Right cardiac atrium (tissue), 5 donors: ENCODE measurements at regions of chr2 and their contacts with region 1.

Region 1: GRCh38 chr2:212777020-212777491 is 238.5 kb upstream of the ERBB4 start:
- DNase-seq: no peak
- ATAC-seq: no peak
- H3K4me3 ChIP-seq: no peak overlapping the region
- H3K27ac ChIP-seq: no peak overlapping the region
- H3K4me1 ChIP-seq: no peaks in the 10 kb centered on the region
- H3K27me3 ChIP-seq: no peaks in the 10 kb centered on the region

Region 2: GRCh38 chr2:212892193-212892592 is 115.1 kb after region 1 on chr2:
- intact Hi-C with region 1: loop called in 1 of 4 experiments (anchors 10 kb)
- DNase-seq: no peak
- ATAC-seq: no peak
- H3K4me3 ChIP-seq: no peak overlapping the region
- H3K27ac ChIP-seq: no peak overlapping the region
- H3K4me1 ChIP-seq: no peaks in the 10 kb centered on the region
- H3K27me3 ChIP-seq: no peaks in the 10 kb centered on the region